Psoas muscle (tissue), 8 donors: ENCODE measurements at regions of chr3 and their contacts with region 1.

Region 1: DNA sequence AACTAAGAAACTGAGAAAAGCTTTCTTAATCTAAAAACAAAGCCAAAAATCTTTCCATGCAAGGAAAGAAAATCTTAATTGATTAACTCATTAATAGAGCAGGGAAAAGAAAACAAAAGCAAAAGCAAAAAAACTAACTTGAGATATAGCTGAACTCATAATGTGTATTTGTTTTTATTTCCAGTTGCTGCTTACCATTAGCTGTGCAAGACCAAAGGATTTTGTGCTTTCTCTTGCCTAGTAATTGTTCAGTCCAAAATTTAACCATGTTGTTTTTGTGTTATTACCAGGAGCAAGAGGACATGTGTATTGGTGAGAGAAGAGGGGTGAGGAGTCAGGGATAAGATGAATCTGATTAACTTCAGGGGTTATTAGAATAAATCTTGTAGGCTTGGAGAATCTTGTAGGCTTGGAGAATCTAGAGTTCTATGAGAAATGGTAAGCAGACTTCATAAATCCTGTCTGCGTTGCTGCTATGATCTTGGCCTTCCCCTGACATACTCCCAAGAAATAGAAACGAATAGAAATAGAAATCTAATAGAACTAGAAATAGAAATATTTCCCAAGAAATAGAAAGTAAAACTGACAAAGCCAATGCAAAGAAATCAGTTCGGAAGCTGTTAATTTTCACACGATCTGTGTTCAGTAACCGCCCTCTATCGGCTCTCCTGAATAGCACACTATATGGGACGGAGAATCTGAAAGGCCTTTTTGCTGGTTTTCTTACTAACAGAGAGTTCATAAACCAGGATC is 72.6 kb upstream of the TNFSF10 start:
- DNase-seq: no peak
- ATAC-seq: peak; percentile 50 to 88 (median 68)
- H3K4me3 ChIP-seq: peak overlapping the region; percentile 53
- H3K27ac ChIP-seq: no peak overlapping the region
- H3K4me1 ChIP-seq: peaks cover 7% of the 10 kb centered on the region
- H3K27me3 ChIP-seq: no peaks in the 10 kb centered on the region
- CTCF ChIP-seq: peak; percentile 72

Region 2: DNA sequence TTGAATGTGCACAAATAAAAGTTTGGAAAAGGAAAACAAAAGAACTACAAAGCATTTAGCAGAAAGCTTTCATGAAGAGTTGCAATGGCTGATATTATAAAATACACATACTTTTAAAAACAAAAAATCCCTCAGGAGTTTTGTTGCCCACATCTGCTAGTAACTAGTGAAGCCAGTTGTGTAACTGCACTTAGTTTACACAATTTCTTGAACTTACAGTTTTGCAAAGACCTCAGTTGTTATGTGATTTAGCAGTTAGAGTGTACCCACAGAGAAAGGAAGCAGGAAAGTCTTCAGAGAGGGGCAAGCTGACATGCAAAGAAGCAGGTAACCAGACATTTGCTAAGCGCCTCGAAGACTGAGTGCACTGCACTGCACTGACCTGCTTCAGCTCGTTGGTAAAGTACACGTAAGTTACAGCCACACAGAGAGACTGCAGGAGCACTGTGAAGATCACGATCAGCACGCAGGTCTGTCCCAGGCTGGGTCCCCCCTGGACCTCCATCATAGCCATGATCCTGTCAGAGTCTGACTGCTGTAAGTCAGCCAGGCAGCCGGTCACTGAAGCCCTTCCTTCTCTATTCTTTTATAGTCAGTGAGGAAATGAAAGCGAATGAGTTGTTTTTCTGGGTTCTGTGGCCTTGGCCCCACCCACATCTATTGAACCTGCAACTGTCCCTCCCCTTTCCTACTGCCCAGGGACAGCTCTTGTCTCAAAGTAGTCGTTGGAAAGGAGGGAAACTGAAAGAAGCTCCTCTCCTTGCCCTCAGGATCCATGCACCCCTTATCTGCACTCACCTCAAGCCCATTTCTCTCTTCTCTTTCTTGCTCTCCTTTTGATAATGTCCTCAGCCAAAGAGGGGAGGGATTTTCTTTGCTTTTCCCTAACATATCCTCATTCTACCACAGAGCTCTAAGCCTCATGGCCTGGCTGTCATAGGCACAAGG is 72.7 kb before region 1 on chr3 and contains the start of gene TNFSF10:
- intact Hi-C with region 1: no loop called
- DNase-seq: peak; percentile 39 to 66
- ATAC-seq: peak; percentile 55 to 82 (median 59)
- H3K4me3 ChIP-seq: peak within 1 kb of the TSS; percentile 68
- H3K27ac ChIP-seq: peak within 1 kb of the TSS; percentile 61
- H3K4me1 ChIP-seq: no peaks in the 10 kb centered on the region
- H3K27me3 ChIP-seq: no peaks in the 10 kb centered on the region
- CTCF ChIP-seq: no peak
- total RNA-seq, gene TNFSF10: 5.5 to 18.6 (median 9.2) TPM

Region 3: DNA sequence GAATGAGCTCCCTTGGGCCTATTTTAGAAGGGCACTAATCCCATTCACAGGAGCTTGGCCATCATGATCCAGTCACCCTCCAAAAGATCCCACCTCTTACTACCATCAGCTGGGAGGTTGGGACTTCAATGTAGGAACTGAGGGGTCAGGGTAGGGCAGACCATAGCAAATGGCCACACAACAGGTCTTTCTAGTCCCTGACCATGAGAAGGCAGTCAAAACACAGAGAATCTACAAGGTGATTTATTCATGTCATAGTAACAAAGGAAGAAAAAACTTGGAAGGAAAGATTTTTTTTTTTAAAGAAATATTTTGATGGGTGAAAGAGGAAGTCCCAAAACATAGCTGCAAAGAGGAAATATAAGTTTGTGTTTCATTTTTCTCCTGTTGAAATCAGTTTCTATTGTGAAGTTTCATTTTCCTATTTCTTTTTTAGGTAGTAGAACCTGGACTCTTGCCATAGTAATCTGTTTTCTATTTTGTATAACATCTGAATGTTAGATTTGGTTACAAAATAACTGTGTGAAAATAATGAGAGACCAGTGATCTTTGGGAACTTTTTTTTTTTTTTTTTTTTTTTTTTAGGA is 49.1 kb before region 1 on chr3:
- intact Hi-C with region 1: loop called in 1 of 2 experiments (anchors 10 kb)
- DNase-seq: no peak
- ATAC-seq: no peak
- H3K4me3 ChIP-seq: no peak overlapping the region
- H3K27ac ChIP-seq: no peak overlapping the region
- H3K4me1 ChIP-seq: no peaks in the 10 kb centered on the region
- H3K27me3 ChIP-seq: no peaks in the 10 kb centered on the region
- CTCF ChIP-seq: no peak